ENCODE measurements at regions of chr2 and their contacts with region 1.

Region 1: DNA sequence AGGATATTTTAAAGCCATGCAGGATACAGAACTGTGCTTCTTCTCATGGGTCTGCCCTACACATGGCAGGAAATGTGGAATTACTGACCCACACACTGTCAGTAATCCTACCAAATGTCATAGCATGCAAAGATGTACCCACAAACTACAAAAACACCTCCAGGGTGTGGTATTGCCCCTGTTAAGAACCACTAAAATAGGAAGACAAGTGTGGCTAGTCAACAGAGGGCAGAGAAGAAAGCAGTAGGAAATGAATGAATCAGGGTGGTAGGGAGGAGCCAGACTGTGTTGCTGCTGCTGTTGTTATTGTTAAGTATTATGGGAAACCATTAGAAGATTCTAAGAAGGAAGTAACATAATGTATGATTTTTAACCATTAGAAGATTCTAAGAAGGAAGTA is 556.7 kb upstream of the ACVR2A start:
- DNase-seq: no peak
- H3K4me3 ChIP-seq: no peak overlapping the region
- H3K27ac ChIP-seq: no peak overlapping the region
- H3K4me1 ChIP-seq: peaks cover 0 to 2% (median 0%) of the 10 kb centered on the region in 4 experiments; a peak in 2 of 7 replicates
- H3K27me3 ChIP-seq: no peaks in the 10 kb centered on the region
- CTCF ChIP-seq: no peak
- EP300 ChIP-seq: no peak
- POLR2A ChIP-seq: no peak
- RAD21 ChIP-seq: peak in 1 of 2 experiments; percentile 29; a peak in 2 of 4 replicates

Region 2: DNA sequence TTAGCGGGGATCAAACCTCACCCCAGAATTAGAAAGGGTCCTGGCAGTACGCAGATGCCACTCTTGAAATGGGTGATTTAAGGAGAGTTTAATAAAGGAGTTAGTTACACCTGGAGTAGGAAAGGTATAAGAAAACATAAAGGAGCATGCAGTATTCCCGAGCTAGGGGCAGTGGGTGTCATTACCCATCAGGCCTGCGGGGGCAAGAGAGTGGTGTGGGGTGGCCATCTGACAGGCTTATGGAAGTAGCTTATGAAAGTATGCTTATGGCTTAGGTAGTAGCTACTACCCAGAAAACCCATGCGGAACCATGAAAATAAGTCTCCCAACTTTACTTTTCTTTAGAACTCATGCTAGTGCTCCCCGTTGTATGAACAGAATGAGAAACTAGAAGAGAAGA is 12.2 kb before region 1 on chr2:
- CTCF ChIA-PET with region 1: interaction called, 17 read pairs
- POLR2A ChIA-PET with region 1: no interaction called
- DNase-seq: peak; percentile 5 to 53
- H3K4me3 ChIP-seq: no peak overlapping the region
- H3K27ac ChIP-seq: no peak overlapping the region
- H3K4me1 ChIP-seq: no peaks in the 10 kb centered on the region
- H3K27me3 ChIP-seq: no peaks in the 10 kb centered on the region
- CTCF ChIP-seq: peak; percentile 12 to 70 (median 55); a peak in 3 of 4 replicates
- EP300 ChIP-seq: no peak
- POLR2A ChIP-seq: no peak
- RAD21 ChIP-seq: peak; percentile 38 to 46; a peak in 3 of 4 replicates

Region 3: GRCh38 chr2:147364597-147364996 is 76.5 kb after region 1 on chr2:
- CTCF ChIA-PET with region 1: no interaction called
- POLR2A ChIA-PET with region 1: no interaction called
- DNase-seq: no peak
- H3K4me3 ChIP-seq: no peak overlapping the region
- H3K27ac ChIP-seq: no peak overlapping the region
- H3K4me1 ChIP-seq: peaks cover 0 to 2% (median 0%) of the 10 kb centered on the region in 4 experiments; a peak in 1 of 7 replicates
- H3K27me3 ChIP-seq: no peaks in the 10 kb centered on the region
- CTCF ChIP-seq: no peak
- EP300 ChIP-seq: no peak
- POLR2A ChIP-seq: no peak
- RAD21 ChIP-seq: no peak

Measured in H1 (cell line).